ENCODE measurements at regions of chr5 and their contacts with region 1.

Region 1: GRCh38 chr5:100186181-100186580 is 349.0 kb upstream of the FAM174A start:
- DNase-seq: no peak
- ATAC-seq: no peak
- H3K4me3 ChIP-seq: no peak overlapping the region
- H3K27ac ChIP-seq: no peak overlapping the region
- H3K4me1 ChIP-seq: no peaks in the 10 kb centered on the region
- H3K27me3 ChIP-seq: no peaks in the 10 kb centered on the region
- CTCF ChIP-seq: no peak

Region 2: GRCh38 chr5:99605904-99606303 is 580.3 kb before region 1 on chr5:
- CTCF ChIA-PET with region 1: no interaction called
- POLR2A ChIA-PET with region 1: no interaction called
- intact Hi-C with region 1: loop called (anchors 10 kb)
- DNase-seq: no peak
- ATAC-seq: no peak
- H3K4me3 ChIP-seq: no peak overlapping the region
- H3K27ac ChIP-seq: no peak overlapping the region
- H3K4me1 ChIP-seq: no peaks in the 10 kb centered on the region
- H3K27me3 ChIP-seq: no peaks in the 10 kb centered on the region
- CTCF ChIP-seq: no peak

Region 3: DNA sequence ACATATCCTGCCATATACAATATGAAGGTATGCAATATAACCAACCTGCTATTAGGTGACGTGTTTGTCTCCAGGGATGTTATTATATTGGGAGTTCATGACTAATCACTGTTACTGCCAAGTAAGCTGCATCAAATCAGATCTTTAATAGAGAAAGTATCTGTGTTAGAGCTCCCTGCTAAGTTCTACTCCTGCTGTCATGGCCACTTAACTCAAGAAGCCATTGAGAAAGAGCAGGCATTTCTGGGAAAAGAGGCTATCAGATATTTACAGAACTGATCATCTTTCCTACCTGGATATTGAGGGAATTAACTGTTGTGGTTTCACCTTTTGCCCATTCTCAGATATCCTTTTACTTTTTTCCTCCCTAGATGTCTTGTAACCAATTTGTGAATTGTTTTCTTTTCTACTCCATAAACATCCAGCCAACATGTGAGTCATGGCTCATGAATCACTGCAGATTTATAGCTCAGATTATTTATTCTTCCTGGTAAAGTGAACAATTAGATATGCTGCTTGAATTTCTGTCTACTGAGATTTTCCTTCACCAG is 285.8 kb before region 1 on chr5:
- CTCF ChIA-PET with region 1: no interaction called
- POLR2A ChIA-PET with region 1: no interaction called
- intact Hi-C with region 1: loop called (anchors 5 kb)
- DNase-seq: peak; percentile 98
- ATAC-seq: peak; percentile 91
- H3K4me3 ChIP-seq: 0 out of 2 replicates have a peak overlapping the region, but pooled peaks have one; percentile 2
- H3K27ac ChIP-seq: peak overlapping the region; percentile 82
- H3K4me1 ChIP-seq: peaks cover 21% of the 10 kb centered on the region
- H3K27me3 ChIP-seq: no peaks in the 10 kb centered on the region
- CTCF ChIP-seq: no peak

Region 4: DNA sequence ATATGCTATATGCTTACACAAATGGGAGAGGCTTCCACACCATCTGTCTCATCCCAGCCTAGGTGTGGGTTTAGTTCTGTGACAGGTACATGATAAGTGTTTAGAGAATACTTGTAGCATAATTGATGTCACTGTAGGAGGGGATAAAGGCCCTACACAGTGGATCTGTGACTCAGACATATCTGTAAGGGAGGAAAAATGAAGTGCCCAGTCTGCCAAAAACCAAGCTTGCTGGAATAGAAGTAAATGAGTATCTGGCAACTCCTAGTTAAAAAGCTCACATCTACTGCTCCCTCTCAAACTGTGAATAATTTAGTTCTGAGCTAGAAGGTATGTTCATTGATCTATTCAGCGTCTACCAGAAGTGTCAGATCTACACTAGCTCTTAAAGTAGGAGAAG is 310.1 kb after region 1 on chr5:
- CTCF ChIA-PET with region 1: no interaction called
- POLR2A ChIA-PET with region 1: no interaction called
- intact Hi-C with region 1: no loop called
- DNase-seq: no peak
- ATAC-seq: no peak
- H3K4me3 ChIP-seq: no peak overlapping the region
- H3K27ac ChIP-seq: no peak overlapping the region
- H3K4me1 ChIP-seq: no peaks in the 10 kb centered on the region
- H3K27me3 ChIP-seq: no peaks in the 10 kb centered on the region
- CTCF ChIP-seq: no peak

Measured in PC-3 (cell line).